Activated CD4-positive, alpha-beta T cell treated with anti-CD3 and anti-CD28 coated beads for 36 hours (primary cell): ENCODE measurements at regions of chr11 and their contacts with region 1.

Region 1: GRCh38 chr11:47176328-47177228 is at the start of gene ARFGAP2:
- DNase-seq: peak; percentile 98
- ATAC-seq: peak; percentile 95
- H3K4me3 Mint-ChIP-seq: peak within 1 kb of the TSS; percentile 96
- H3K27ac Mint-ChIP-seq: peak within 1 kb of the TSS; percentile 98
- H3K4me1 Mint-ChIP-seq: peaks cover 34% of the 10 kb centered on the region
- H3K27me3 Mint-ChIP-seq: no peaks in the 10 kb centered on the region
- total RNA-seq, gene ARFGAP2: 74.9 to 76.5 TPM

Region 2: GRCh38 chr11:47213985-47214564 is 37.5 kb after region 1 on chr11:
- CTCF ChIA-PET with region 1: interaction called, 22 read pairs
- POLR2A ChIA-PET with region 1: interaction called, 7 read pairs
- intact Hi-C with region 1: loop called (anchors 1 kb)
- DNase-seq: peak; percentile 94
- ATAC-seq: peak; percentile 80
- H3K4me3 Mint-ChIP-seq: peak overlapping the region; percentile 99
- H3K27ac Mint-ChIP-seq: peak overlapping the region; percentile 100
- H3K4me1 Mint-ChIP-seq: peaks cover 31% of the 10 kb centered on the region
- H3K27me3 Mint-ChIP-seq: no peaks in the 10 kb centered on the region

Region 3: DNA sequence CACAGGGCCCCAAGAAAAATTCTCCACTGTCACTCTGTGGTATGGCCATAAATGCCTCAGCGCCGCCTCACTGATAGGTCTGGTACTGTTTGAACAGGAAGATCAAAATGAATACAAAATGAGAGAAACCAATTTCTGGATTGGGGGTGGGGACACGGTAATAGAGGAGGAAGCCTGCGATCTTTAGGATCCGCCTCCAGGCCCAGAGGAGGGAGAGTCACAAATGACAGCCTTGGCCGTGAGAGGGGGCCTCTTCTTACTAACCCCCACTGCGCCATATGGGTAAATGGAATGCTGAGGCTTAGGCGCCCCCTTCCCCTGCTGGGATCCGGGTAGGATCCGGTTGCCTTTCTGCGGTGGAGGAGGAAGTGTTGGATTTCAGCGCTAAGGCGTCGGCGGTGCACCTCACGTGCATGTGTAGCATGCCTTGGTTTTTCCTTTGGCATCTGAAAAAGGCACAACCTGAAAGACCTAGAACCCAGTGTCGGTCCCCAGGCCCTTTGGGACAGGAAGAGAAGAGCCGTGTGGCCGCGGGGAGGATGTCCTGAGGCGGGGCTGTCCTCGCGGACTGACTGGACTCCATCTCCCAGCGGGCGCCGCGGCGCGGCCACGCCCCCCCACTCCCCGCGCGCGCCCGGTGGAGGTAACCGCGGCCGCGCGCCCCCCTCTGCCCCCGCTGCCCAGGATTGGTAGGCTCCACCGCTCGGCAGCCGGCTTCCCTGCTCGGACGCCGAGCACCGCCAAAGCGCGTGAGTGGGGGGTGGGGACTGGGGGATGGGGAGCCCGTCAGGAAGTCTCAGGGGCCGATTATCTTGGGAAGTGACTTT is 92.6 kb after region 1 on chr11:
- CTCF ChIA-PET with region 1: interaction called, 4 read pairs
- POLR2A ChIA-PET with region 1: interaction called, 3 read pairs
- intact Hi-C with region 1: loop called (anchors 1 kb)
- DNase-seq: peak; percentile 93
- ATAC-seq: peak; percentile 61
- H3K4me3 Mint-ChIP-seq: peak overlapping the region; percentile 76
- H3K27ac Mint-ChIP-seq: peak overlapping the region; percentile 98
- H3K4me1 Mint-ChIP-seq: peaks cover 60% of the 10 kb centered on the region
- H3K27me3 Mint-ChIP-seq: no peaks in the 10 kb centered on the region

Region 4: GRCh38 chr11:47289856-47290255 is 113.3 kb after region 1 on chr11:
- CTCF ChIA-PET with region 1: no interaction called
- POLR2A ChIA-PET with region 1: no interaction called
- intact Hi-C with region 1: no loop called
- DNase-seq: no peak
- ATAC-seq: no peak
- H3K4me3 Mint-ChIP-seq: no peak overlapping the region
- H3K27ac Mint-ChIP-seq: no peak overlapping the region
- H3K4me1 Mint-ChIP-seq: no peaks in the 10 kb centered on the region
- H3K27me3 Mint-ChIP-seq: no peaks in the 10 kb centered on the region

Region 5: GRCh38 chr11:47454180-47454644 is 277.6 kb after region 1 on chr11:
- CTCF ChIA-PET with region 1: no interaction called
- POLR2A ChIA-PET with region 1: no interaction called
- intact Hi-C with region 1: loop called (anchors 1 kb)
- DNase-seq: peak; percentile 81
- ATAC-seq: peak; percentile 97
- H3K4me3 Mint-ChIP-seq: no peak overlapping the region
- H3K27ac Mint-ChIP-seq: no peak overlapping the region
- H3K4me1 Mint-ChIP-seq: no peaks in the 10 kb centered on the region
- H3K27me3 Mint-ChIP-seq: no peaks in the 10 kb centered on the region

Region 6: GRCh38 chr11:47642099-47642855 is 465.7 kb after region 1 on chr11 and contains the start of gene MTCH2:
- CTCF ChIA-PET with region 1: no interaction called
- POLR2A ChIA-PET with region 1: no interaction called
- intact Hi-C with region 1: loop called in 1 of 2 experiments (anchors 1 kb)
- DNase-seq: peak; percentile 98
- ATAC-seq: peak; percentile 94
- H3K4me3 Mint-ChIP-seq: peak within 1 kb of the TSS; percentile 99
- H3K27ac Mint-ChIP-seq: peak within 1 kb of the TSS; percentile 96
- H3K4me1 Mint-ChIP-seq: peaks cover 25% of the 10 kb centered on the region
- H3K27me3 Mint-ChIP-seq: no peaks in the 10 kb centered on the region
- total RNA-seq, gene MTCH2: 94.8 to 138 TPM